Activated CD4-positive, alpha-beta T cell treated with anti-CD3 and anti-CD28 coated beads for 36 hours (primary cell): ENCODE measurements at regions of chr3 and their contacts with region 1.

Region 1: GRCh38 chr3:133851266-133851906 is 44.3 kb downstream of the RAB6B start:
- DNase-seq: peak; percentile 60
- ATAC-seq: peak; percentile 97
- H3K4me3 Mint-ChIP-seq: no peak overlapping the region
- H3K27ac Mint-ChIP-seq: peak overlapping the region; percentile 7
- H3K4me1 Mint-ChIP-seq: peaks cover 8% of the 10 kb centered on the region
- H3K27me3 Mint-ChIP-seq: peaks cover 3% of the 10 kb centered on the region

Region 2: DNA sequence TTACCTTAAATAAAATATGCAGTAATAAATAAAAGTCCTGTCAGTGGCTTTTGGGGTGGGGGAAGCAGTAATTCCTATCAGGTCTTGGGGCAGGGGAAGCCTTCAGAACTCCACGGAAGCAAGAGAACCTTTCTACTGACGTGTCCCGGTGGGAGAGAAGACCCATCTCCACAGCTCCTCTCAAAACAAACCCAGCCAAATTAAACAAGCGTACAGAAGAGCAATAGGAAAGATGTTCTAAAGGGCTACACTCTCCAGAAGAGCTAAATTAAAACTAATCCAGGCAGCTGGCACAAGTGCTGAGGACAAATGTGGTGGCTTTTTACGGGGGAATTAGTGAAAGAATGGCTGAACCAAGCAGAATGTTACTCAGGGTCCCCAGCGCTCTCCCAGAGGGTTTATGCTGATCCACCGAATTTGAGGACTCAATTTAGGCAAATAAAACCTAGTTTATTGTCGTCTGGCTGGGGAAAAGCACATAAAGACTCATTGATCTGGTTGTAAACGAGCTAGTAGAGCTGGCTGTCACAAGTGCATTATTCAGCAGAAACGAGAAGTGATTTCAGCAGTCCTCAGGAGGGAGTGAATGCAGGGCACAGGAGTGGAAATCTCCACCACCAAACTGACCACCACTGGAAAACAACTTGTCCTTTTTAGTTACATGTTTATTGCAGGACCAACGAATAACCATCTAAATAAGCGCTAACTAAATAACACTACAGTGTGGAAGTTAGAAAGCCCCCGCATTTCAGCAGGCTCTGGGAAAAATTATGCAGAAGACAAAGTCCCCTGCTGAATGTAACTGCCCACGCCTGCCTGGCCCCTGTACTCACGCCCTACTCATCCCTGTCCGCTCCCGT is 438.0 kb before region 1 on chr3:
- CTCF ChIA-PET with region 1: no interaction called
- POLR2A ChIA-PET with region 1: no interaction called
- intact Hi-C with region 1: no loop called
- DNase-seq: peak; percentile 21
- ATAC-seq: peak; percentile 30
- H3K4me3 Mint-ChIP-seq: no peak overlapping the region
- H3K27ac Mint-ChIP-seq: no peak overlapping the region
- H3K4me1 Mint-ChIP-seq: peaks cover 3% of the 10 kb centered on the region
- H3K27me3 Mint-ChIP-seq: no peaks in the 10 kb centered on the region

Region 3: DNA sequence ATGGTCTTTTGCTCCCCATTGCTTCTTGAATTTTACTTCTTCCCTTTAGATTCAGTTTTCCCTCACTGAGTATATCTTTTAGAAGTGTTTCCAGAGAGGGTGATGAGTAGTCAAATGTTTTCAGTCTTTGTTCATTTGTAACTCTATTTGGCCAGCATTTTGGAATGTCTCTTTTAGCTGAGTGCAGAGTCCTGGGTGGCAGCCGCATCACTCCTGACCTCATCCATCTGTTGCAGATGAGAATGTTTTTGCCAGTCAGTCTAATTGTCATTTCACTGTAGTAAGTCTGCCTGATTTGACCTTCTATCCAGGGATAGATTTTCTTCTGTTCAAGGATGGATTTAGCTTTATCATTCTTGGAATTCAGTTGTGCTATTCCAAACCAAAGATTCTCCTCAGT is 38.5 kb before region 1 on chr3:
- CTCF ChIA-PET with region 1: interaction called, 4 read pairs
- POLR2A ChIA-PET with region 1: no interaction called
- intact Hi-C with region 1: loop called in 1 of 2 experiments (anchors 1 kb)
- DNase-seq: no peak
- ATAC-seq: no peak
- H3K4me3 Mint-ChIP-seq: no peak overlapping the region
- H3K27ac Mint-ChIP-seq: no peak overlapping the region
- H3K4me1 Mint-ChIP-seq: peaks cover 30% of the 10 kb centered on the region
- H3K27me3 Mint-ChIP-seq: no peaks in the 10 kb centered on the region